Breast epithelium (tissue), 4 donors: ENCODE measurements at regions of chr6 and their contacts with region 1.

Region 1: GRCh38 chr6:110554966-110555460 is 78.6 kb upstream of the SLC22A16 start:
- DNase-seq: peak in 1 of 2 donors; percentile 54
- H3K4me3 ChIP-seq: no peak overlapping the region
- H3K27ac ChIP-seq: peak overlapping the region; percentile 81 to 83
- H3K4me1 ChIP-seq: no peaks in the 10 kb centered on the region
- H3K27me3 ChIP-seq: no peaks in the 10 kb centered on the region
- CTCF ChIP-seq: no peak
- POLR2A ChIP-seq: no peak

Region 2: DNA sequence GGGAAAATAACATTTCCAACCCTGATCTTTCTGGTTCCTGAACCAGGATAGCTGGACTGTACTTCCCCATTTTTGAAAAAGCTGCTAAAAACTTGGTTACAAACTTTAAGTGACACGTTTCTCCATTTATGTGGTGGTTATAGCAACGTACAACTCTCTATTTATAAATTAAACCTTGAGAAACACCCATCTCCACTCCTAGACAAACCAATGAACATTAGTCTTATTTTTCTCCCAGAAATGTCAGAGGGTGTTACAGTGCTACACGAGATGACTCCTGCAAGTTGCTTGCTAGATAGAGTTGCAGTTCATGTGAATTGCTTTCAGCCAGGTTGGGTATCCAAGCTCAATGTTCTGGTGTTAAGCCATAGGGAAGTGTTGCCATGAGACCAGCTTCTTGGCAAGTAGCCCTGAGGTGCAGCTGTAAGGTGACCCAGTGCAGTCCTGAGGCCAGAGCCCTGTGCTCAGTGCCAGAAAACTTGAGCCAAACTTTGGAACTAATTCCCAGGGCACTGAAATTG is 979.3 kb after region 1 on chr6:
- intact Hi-C with region 1: loop called (anchors 5 kb)
- DNase-seq: peak; percentile 72 to 92
- H3K4me3 ChIP-seq: no peak overlapping the region
- H3K27ac ChIP-seq: peak overlapping the region in 1 of 2 donors; percentile 58
- H3K4me1 ChIP-seq: peaks cover 0 to 5% of the 10 kb centered on the region in 2 donors
- H3K27me3 ChIP-seq: no peaks in the 10 kb centered on the region
- CTCF ChIP-seq: no peak
- POLR2A ChIP-seq: no peak